ENCODE measurements at regions of chr6 and their contacts with region 1.

Region 1: DNA sequence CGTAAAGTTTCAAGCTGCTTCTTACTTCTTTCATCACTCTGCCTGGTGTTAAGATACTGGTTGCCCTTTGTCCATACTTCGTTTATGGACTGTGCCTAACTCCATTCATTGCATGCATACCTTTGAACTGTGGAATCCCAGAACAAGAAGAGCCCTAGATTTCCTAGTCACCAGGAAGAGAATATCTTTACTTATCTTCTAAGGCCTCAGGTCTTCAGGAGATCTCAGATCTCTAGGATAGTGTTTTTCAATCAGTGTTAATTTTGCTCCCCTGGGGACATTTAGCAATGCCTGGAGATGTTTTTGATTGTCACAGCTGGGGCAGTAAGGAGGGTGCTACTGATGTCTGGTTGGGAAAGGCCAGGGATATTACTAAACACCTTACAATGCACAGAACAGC is 35.5 kb upstream of the GJA1 start:
- DNase-seq: no peak
- H3K4me3 Mint-ChIP-seq: no peak overlapping the region
- H3K27ac Mint-ChIP-seq: no peak overlapping the region
- H3K4me1 Mint-ChIP-seq: no peaks in the 10 kb centered on the region
- H3K27me3 Mint-ChIP-seq: no peaks in the 10 kb centered on the region
- CTCF ChIP-seq: no peak

Region 2: GRCh38 chr6:121055572-121056163 is 344.3 kb before region 1 on chr6:
- CTCF ChIA-PET with region 1: interaction called, 15 read pairs
- POLR2A ChIA-PET with region 1: no interaction called
- intact Hi-C with region 1: loop called (anchors 1 kb)
- DNase-seq: peak; percentile 72
- H3K4me3 Mint-ChIP-seq: no peak overlapping the region
- H3K27ac Mint-ChIP-seq: no peak overlapping the region
- H3K4me1 Mint-ChIP-seq: no peaks in the 10 kb centered on the region
- H3K27me3 Mint-ChIP-seq: no peaks in the 10 kb centered on the region
- CTCF ChIP-seq: peak; percentile 67

Region 3: DNA sequence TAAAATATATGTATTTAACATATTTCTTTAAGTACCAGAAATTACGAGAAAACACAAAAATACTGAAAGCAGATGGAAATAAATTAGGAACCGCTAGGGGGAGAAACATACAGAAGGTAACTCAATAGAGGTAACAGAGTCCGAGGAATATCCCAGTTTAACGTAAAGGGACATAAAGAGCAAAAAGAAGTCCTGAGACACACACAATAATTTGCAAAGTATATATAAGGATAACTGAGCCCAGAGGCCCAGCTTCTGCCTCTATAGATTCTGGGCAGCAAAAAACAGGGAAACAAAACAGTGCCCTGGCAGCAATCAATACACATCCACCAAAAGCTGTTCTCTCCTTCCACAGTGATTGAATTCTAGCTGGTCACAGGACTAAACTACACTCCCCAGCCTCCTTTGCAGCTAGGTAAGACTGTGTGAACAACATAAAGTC is 80.8 kb before region 1 on chr6:
- CTCF ChIA-PET with region 1: interaction called, 26 read pairs
- POLR2A ChIA-PET with region 1: no interaction called
- intact Hi-C with region 1: loop called (anchors 1 kb)
- DNase-seq: peak; percentile 11
- H3K4me3 Mint-ChIP-seq: no peak overlapping the region
- H3K27ac Mint-ChIP-seq: no peak overlapping the region
- H3K4me1 Mint-ChIP-seq: no peaks in the 10 kb centered on the region
- H3K27me3 Mint-ChIP-seq: no peaks in the 10 kb centered on the region
- CTCF ChIP-seq: peak; percentile 42

Region 4: GRCh38 chr6:121354764-121355163 is 45.2 kb before region 1 on chr6:
- CTCF ChIA-PET with region 1: interaction called, 15 read pairs
- POLR2A ChIA-PET with region 1: no interaction called
- intact Hi-C with region 1: no loop called
- DNase-seq: no peak
- H3K4me3 Mint-ChIP-seq: no peak overlapping the region
- H3K27ac Mint-ChIP-seq: no peak overlapping the region
- H3K4me1 Mint-ChIP-seq: no peaks in the 10 kb centered on the region
- H3K27me3 Mint-ChIP-seq: no peaks in the 10 kb centered on the region
- CTCF ChIP-seq: no peak

Region 5: GRCh38 chr6:121436960-121437850 is 37.2 kb after region 1 on chr6:
- CTCF ChIA-PET with region 1: no interaction called
- POLR2A ChIA-PET with region 1: no interaction called
- intact Hi-C with region 1: no loop called
- DNase-seq: no peak
- H3K4me3 Mint-ChIP-seq: peak overlapping the region; percentile 65
- H3K27ac Mint-ChIP-seq: no peak overlapping the region
- H3K4me1 Mint-ChIP-seq: peaks cover 7% of the 10 kb centered on the region
- H3K27me3 Mint-ChIP-seq: no peaks in the 10 kb centered on the region
- CTCF ChIP-seq: no peak